IMR-90 (cell line): ENCODE measurements at regions of chr9 and their contacts with region 1.

Region 1: DNA sequence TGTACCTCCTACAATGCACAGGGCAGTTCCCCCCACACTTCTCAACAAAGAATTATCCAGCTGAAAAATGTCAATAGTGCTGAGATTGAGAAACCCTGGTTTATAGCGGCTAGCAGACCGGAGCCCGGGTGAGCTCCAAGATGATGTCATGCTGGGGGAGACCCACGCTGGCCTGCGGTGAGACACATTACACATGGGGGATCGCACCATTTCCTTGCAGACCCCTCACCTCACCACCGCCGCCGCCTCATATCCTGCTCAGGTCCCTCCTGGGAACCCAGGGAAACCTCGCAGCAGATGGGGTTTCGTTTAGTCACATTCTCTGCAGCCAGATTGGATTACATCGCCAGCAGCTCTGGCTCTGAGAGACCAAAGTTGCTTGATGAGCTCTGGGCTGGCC is 14.7 kb upstream of the TNC start:
- DNase-seq: peak; percentile 89
- ATAC-seq: peak; percentile 66
- H3K4me3 ChIP-seq: peak overlapping the region; percentile 2; the same call in 1 of the 2 replicates
- H3K27ac ChIP-seq: peak overlapping the region; percentile 74
- H3K4me1 ChIP-seq: peaks cover 18% of the 10 kb centered on the region
- H3K27me3 ChIP-seq: no peaks in the 10 kb centered on the region
- CTCF ChIP-seq: no peak
- POLR2A ChIP-seq: no peak
- RAD21 ChIP-seq: 0 out of 2 replicates have a peak, but pooled peaks have one; percentile 6

Region 2: GRCh38 chr9:115146581-115147021 is 14.0 kb after region 1 on chr9:
- CTCF ChIA-PET with region 1: no interaction called
- POLR2A ChIA-PET with region 1: no interaction called
- dilution Hi-C with region 1: no loop called
- in situ Hi-C with region 1: no loop called
- intact Hi-C with region 1: loop called (anchors 1 kb)
- DNase-seq: peak; percentile 96
- ATAC-seq: peak; percentile 89
- H3K4me3 ChIP-seq: no peak overlapping the region
- H3K27ac ChIP-seq: peak overlapping the region; percentile 93
- H3K4me1 ChIP-seq: peaks cover 27% of the 10 kb centered on the region
- H3K27me3 ChIP-seq: no peaks in the 10 kb centered on the region
- CTCF ChIP-seq: no peak
- POLR2A ChIP-seq: no peak
- RAD21 ChIP-seq: no peak; the same call in 1 of the 2 replicates